Transverse colon (tissue), 4 donors: ENCODE measurements at regions of chr10 and their contacts with region 1.

Region 1: DNA sequence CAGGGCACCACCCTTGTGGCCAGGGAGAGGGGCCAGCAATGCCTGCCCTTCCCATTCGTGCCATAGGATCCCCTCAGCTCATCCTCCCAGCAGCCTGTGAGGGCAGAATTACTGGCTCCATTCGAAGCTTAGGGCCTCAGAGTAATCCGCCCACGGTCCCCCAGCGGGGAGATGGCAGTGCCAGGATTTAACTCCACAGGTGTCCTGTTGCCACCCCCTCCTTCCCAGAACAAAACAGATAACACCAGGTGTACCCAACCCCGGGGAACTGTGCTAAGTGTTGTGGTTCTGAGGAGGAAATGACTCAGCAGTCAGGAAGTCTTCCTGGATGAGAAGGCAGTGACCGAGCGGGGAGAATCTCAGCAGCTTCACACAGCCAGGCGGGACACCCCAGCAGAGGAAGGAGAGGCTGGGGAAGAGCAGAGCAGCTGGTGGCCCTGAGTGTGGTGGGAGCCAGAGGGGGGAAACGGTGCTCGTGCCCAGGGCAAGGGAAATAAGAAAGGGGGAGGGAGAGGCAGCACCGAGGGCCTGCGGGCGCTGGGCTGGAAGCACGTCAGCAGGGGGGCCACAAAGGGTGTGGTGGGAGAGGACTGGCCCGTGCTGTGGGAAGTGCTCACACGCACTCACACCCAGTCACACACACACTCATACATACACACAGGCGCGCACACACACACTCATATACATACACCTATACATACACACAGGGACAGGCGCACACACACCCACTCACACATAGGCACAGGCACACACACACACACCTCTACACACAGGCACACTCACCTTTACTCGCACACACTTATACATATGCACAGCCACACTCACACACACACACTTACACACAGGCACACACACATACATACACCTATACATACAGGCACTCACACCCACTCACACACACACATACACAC is 59.8 kb upstream of the CHST15 start:
- DNase-seq: peak; percentile 67
- H3K4me3 ChIP-seq: no peak overlapping the region
- H3K27ac ChIP-seq: peak overlapping the region; percentile 59 to 77 (median 72)
- H3K4me1 ChIP-seq: peaks cover 32 to 59% (median 43%) of the 10 kb centered on the region in 4 donors
- H3K27me3 ChIP-seq: no peaks in the 10 kb centered on the region
- CTCF ChIP-seq: peak in 1 of 5 experiments; percentile 9
- EP300 ChIP-seq: no peak
- POLR2A ChIP-seq: no peak

Region 2: DNA sequence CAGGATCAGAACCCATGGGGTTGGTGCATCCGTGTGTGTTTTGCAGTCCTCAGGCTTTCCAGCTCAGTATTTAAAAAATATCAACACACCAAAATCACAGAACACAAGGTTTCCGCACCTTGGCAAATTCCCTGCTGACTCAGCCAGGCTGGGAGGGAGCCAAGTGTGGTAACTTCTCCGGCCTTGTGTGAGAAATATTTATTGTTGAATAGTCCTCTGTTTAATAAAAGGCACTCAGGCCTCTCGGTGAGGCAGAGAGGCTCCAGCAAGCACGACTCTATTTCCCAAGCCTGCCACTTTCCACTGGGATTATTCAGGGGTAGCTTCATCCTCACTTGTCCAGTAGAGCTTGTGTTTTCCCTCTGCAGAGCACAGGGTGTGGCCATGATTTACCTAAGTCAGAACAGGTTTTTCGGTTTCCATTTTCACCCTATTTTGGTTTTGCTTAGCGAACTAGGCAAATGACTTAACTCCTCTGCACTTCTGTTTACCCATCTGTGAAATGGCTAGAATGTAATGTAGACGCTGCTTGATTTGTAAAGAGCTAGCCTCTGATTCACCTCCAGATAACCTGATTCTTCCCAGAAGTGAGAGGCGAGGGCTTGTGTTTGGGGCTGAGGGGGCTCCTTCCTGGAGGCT is 46.8 kb before region 1 on chr10:
- in situ Hi-C with region 1: no loop called
- intact Hi-C with region 1: loop called (anchors 10 kb)
- DNase-seq: peak; percentile 71
- H3K4me3 ChIP-seq: no peak overlapping the region
- H3K27ac ChIP-seq: peak overlapping the region; percentile 68 to 81 (median 71)
- H3K4me1 ChIP-seq: peaks cover 13 to 23% (median 16%) of the 10 kb centered on the region in 4 donors
- H3K27me3 ChIP-seq: no peaks in the 10 kb centered on the region
- CTCF ChIP-seq: no peak
- EP300 ChIP-seq: no peak
- POLR2A ChIP-seq: no peak